Activated B cell treated with CpG ODN at 0.5 μM for 24 hours (primary cell): ENCODE measurements at regions of chr12 and their contacts with region 1.

Region 1: GRCh38 chr12:62581288-62582064 is 114.8 kb downstream of the MON2 start:
- DNase-seq: no peak
- ATAC-seq: peak; percentile 81
- H3K4me3 Mint-ChIP-seq: no peak overlapping the region
- H3K27ac Mint-ChIP-seq: no peak overlapping the region
- H3K4me1 Mint-ChIP-seq: no peaks in the 10 kb centered on the region
- H3K27me3 Mint-ChIP-seq: no peaks in the 10 kb centered on the region
- CTCF ChIP-seq: peak; percentile 57

Region 2: DNA sequence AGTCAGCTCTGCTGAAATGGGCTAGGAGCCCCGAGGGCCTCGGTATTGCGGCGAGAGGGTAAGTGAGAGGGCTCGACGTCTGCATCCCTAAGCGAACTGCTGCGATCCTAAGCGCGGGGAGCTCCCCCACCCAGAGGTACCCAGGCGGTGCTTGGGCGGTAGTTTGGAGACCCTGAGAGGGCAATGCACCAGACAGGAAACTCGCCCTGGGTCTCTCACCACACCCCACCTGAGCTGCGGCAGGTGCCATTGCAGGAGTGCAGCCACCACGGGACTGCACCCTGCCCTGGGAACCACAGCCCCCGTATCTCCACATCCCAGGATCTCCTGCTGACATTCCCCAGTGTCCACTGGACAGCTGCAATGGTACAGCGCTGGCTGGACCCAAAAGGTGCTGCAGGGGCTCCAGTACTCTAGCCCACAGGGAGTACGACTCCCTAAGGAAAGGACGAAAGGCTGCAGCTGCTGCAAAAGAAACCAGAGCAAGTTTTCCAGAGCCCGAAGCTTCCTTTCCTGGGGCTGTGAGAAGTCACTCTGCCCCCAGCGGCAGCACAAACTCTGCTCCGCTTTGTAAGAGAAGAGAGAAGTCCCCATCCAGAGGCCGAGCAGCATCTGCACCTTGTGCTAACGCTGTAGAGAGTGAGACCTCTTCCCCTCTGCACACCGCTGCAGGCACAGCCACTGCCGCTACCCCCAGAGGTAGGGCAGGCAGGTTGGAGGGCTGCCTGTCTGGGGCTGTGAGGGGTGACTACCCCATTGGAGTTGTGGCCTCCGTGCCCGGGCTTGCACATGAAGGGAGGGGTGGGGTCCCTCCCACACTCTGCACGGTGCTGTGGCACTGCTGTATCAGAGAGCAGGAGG is 145.9 kb before region 1 on chr12:
- CTCF ChIA-PET with region 1: interaction called, 6 read pairs
- POLR2A ChIA-PET with region 1: no interaction called
- intact Hi-C with region 1: loop called (anchors 2 kb)
- DNase-seq: peak; percentile 20
- ATAC-seq: peak; percentile 69
- H3K4me3 Mint-ChIP-seq: peak overlapping the region; percentile 79
- H3K27ac Mint-ChIP-seq: no peak overlapping the region
- H3K4me1 Mint-ChIP-seq: peaks cover 17% of the 10 kb centered on the region
- H3K27me3 Mint-ChIP-seq: peaks cover 15% of the 10 kb centered on the region
- CTCF ChIP-seq: no peak

Region 3: DNA sequence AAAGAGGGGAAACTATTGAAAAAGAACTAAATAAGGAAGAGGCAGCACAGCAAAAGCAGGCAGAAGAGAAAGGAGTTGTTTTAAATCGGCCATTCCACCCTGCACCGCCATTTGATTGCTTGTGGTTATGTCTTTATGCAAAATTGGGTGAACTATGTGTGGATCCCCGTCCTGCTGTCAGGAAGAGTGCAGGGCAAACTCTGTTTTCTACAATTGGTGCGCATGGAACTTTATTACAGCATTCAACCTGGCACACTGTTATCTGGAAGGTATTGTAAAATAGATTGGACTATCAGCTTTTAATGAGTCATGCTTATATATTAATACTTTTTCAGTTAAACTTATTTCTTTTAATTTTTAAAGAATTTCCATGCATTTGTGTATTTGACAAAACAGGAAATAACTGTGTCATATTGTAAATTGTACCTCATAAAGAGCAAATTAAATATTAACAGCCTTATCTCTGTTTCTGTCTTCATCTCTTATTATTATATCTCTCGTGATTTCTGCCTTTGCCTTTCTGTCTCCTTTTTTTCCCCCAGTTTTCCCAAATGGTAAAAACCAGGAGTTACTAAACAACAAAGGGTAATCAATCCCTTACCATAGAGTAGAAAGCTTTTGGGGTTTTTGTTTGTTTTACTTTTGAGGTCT is 28.4 kb before region 1 on chr12:
- CTCF ChIA-PET with region 1: no interaction called
- POLR2A ChIA-PET with region 1: no interaction called
- intact Hi-C with region 1: loop called (anchors 2 kb)
- DNase-seq: no peak
- ATAC-seq: no peak
- H3K4me3 Mint-ChIP-seq: no peak overlapping the region
- H3K27ac Mint-ChIP-seq: no peak overlapping the region
- H3K4me1 Mint-ChIP-seq: no peaks in the 10 kb centered on the region
- H3K27me3 Mint-ChIP-seq: no peaks in the 10 kb centered on the region
- CTCF ChIP-seq: no peak

Region 4: DNA sequence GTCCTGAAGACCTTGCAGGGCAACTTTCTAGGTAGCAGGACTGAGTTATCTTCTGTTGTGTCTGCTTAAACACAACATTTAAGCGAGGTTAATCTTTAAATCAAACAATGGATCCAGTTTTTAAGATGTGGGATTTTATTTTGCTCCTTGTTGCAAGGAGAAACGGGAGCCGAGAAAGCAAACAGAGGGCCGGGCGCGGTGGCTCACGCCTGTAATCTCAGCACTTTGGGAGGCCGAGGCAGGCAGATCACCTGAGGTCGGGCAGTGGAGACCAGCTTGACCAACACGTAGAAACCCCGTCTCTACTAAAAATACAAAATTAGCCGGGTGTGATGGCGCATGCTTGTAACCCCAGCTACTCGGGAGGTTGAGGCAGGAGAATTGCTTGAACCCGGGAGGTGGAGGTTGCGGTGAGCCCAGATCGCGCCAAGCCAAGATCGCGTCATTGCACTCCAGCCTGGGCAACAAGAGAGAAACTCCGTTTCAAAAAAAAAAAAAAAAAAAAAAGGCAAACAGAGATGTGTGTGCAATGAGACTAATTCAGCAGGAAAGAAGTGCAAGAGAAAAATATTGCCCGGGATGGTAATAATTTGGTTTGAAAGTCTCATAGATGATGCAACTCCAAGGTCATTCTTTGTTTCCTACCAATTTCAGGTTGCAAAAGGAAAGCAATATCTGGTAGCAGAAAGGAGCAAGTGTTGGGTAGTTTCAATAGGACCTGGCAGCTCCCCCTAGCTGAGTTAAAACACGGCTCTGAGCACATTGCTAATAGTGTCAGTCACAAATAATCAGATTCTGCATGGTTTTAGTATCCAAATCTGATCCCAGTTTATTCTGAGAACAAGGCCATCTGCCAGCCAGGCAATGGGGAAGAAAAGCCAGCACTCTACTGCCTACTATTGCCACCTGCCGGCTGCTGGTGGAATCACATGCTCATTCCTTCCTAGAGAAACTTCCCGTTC is 212.1 kb after region 1 on chr12:
- CTCF ChIA-PET with region 1: interaction called, 239 read pairs
- POLR2A ChIA-PET with region 1: interaction called, 3 read pairs
- intact Hi-C with region 1: loop called (anchors 1 kb)
- DNase-seq: peak; percentile 67
- ATAC-seq: peak; percentile 82
- H3K4me3 Mint-ChIP-seq: no peak overlapping the region
- H3K27ac Mint-ChIP-seq: no peak overlapping the region
- H3K4me1 Mint-ChIP-seq: no peaks in the 10 kb centered on the region
- H3K27me3 Mint-ChIP-seq: no peaks in the 10 kb centered on the region
- CTCF ChIP-seq: peak; percentile 93

Region 5: DNA sequence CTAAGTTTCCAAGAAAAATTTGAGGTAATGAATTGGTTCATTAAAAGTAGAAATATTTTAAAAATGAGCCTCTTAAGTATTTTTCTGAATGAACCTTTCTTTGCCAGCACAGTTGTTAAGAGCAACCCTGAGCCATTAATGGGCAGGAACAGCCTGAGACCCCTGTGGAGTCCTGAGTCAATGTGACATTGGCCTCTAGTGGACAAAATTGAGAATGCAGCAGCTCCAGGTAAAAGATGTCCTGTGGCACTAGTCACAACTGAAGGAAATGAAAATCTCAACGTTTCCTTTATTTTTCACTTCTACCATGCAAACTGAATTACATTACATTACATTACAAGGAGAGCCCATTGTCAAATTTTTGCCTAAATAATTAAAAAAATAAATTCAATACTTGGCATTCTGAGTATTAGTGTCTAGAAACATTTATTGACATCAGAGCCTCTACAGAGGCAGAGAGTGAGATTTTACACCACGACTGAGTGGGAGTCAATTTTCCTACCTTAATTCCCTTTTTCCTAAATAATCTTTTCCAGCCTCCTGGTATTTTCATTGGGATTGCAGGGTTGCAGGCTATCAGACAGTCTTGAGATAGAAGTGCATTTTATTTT is 217.8 kb after region 1 on chr12:
- CTCF ChIA-PET with region 1: interaction called, 239 read pairs
- POLR2A ChIA-PET with region 1: interaction called, 3 read pairs
- intact Hi-C with region 1: loop called (anchors 1 kb)
- DNase-seq: no peak
- ATAC-seq: peak; percentile 93
- H3K4me3 Mint-ChIP-seq: no peak overlapping the region
- H3K27ac Mint-ChIP-seq: no peak overlapping the region
- H3K4me1 Mint-ChIP-seq: peaks cover 3% of the 10 kb centered on the region
- H3K27me3 Mint-ChIP-seq: peaks cover 2% of the 10 kb centered on the region
- CTCF ChIP-seq: peak; percentile 75

Region 6: GRCh38 chr12:62813031-62813829 is 231.8 kb after region 1 on chr12:
- CTCF ChIA-PET with region 1: interaction called, 13 read pairs
- POLR2A ChIA-PET with region 1: no interaction called
- intact Hi-C with region 1: no loop called
- DNase-seq: no peak
- ATAC-seq: peak; percentile 42
- H3K4me3 Mint-ChIP-seq: peak overlapping the region; percentile 66
- H3K27ac Mint-ChIP-seq: no peak overlapping the region
- H3K4me1 Mint-ChIP-seq: peaks cover 6% of the 10 kb centered on the region
- H3K27me3 Mint-ChIP-seq: peaks cover 3% of the 10 kb centered on the region
- CTCF ChIP-seq: no peak